AG04450 (cell line): ENCODE measurements at regions of chr11 and their contacts with region 1.

Region 1: GRCh38 chr11:7098235-7098832 is 9.5 kb downstream of the RBMXL2 start:
- DNase-seq: no peak
- H3K4me3 ChIP-seq: no peak overlapping the region
- H3K27ac ChIP-seq: no peak overlapping the region
- H3K27me3 ChIP-seq: no peaks in the 10 kb centered on the region
- CTCF ChIP-seq: peak; percentile 71

Region 2: GRCh38 chr11:7115780-7116179 is 17.4 kb after region 1 on chr11:
- CTCF ChIA-PET with region 1: interaction called, 10 read pairs
- POLR2A ChIA-PET with region 1: no interaction called
- DNase-seq: no peak
- H3K4me3 ChIP-seq: no peak overlapping the region
- H3K27ac ChIP-seq: no peak overlapping the region
- H3K27me3 ChIP-seq: no peaks in the 10 kb centered on the region
- CTCF ChIP-seq: no peak

Region 3: GRCh38 chr11:7278314-7278917 is 180.1 kb after region 1 on chr11:
- CTCF ChIA-PET with region 1: interaction called, 23 read pairs
- POLR2A ChIA-PET with region 1: no interaction called
- DNase-seq: no peak
- H3K4me3 ChIP-seq: no peak overlapping the region
- H3K27ac ChIP-seq: no peak overlapping the region
- H3K27me3 ChIP-seq: no peaks in the 10 kb centered on the region
- CTCF ChIP-seq: peak; percentile 72

Region 4: GRCh38 chr11:7442588-7443215 is 344.4 kb after region 1 on chr11:
- CTCF ChIA-PET with region 1: interaction called, 53 read pairs
- POLR2A ChIA-PET with region 1: no interaction called
- DNase-seq: peak; percentile 2
- H3K4me3 ChIP-seq: no peak overlapping the region
- H3K27ac ChIP-seq: no peak overlapping the region
- H3K27me3 ChIP-seq: peaks cover 5% of the 10 kb centered on the region
- CTCF ChIP-seq: peak; percentile 86

Region 5: GRCh38 chr11:7688238-7688826 is 590.0 kb after region 1 on chr11:
- CTCF ChIA-PET with region 1: interaction called, 21 read pairs
- POLR2A ChIA-PET with region 1: no interaction called
- DNase-seq: no peak
- H3K4me3 ChIP-seq: no peak overlapping the region
- H3K27ac ChIP-seq: no peak overlapping the region
- H3K27me3 ChIP-seq: peaks cover 26% of the 10 kb centered on the region
- CTCF ChIP-seq: peak; percentile 87